ENCODE measurements at regions of chr18 and their contacts with region 1.

Region 1: DNA sequence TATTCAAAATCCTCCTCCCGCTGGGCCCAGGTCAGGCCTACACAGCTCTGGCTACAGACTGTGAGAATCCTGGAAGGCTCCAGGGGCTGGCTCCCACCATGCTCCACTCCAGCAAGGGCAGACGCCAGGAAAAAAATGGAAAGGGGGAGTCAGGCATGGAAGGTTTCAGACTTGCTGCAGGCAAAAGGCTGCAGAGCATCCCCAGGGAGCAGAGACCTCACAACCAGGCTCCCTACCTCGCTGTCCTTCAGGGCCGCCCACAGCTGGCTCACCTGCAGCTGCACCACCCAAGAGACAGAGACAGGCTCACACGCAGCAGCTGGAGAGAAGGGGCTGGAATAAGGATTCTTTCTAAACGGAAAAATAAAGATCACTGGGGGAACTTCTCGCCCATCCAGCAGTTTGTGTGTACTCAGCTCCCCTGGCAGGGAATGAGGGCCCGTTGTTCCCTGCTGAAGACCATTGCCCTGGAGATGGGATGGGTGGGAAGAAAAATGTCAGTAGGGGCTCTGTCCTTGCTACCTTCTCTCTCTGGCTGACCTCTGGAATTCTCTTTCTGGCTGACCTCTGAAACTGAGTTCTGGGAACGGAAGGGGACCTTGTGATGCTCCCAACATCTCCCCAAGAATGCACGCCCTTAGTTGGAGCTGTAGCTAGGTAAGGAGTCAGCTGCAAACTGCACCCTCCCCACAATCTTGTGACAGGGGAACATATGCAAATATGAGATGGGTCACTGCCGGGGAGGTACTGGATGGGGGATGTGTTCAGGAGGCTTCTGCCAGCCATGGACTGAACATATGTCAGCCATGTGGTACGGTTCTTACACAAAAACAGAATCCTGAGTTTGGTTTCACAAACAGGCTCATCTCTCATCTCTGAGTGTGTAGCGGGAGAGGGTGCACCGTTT is 34.5 kb downstream of the BCL2 start:
- DNase-seq: peak; percentile 55
- CTCF ChIP-seq: no peak

Region 2: GRCh38 chr18:63267975-63268721 is 16.9 kb before region 1 on chr18:
- CTCF ChIA-PET with region 1: interaction called, 20 read pairs
- POLR2A ChIA-PET with region 1: no interaction called
- DNase-seq: no peak
- CTCF ChIP-seq: no peak

Region 3: DNA sequence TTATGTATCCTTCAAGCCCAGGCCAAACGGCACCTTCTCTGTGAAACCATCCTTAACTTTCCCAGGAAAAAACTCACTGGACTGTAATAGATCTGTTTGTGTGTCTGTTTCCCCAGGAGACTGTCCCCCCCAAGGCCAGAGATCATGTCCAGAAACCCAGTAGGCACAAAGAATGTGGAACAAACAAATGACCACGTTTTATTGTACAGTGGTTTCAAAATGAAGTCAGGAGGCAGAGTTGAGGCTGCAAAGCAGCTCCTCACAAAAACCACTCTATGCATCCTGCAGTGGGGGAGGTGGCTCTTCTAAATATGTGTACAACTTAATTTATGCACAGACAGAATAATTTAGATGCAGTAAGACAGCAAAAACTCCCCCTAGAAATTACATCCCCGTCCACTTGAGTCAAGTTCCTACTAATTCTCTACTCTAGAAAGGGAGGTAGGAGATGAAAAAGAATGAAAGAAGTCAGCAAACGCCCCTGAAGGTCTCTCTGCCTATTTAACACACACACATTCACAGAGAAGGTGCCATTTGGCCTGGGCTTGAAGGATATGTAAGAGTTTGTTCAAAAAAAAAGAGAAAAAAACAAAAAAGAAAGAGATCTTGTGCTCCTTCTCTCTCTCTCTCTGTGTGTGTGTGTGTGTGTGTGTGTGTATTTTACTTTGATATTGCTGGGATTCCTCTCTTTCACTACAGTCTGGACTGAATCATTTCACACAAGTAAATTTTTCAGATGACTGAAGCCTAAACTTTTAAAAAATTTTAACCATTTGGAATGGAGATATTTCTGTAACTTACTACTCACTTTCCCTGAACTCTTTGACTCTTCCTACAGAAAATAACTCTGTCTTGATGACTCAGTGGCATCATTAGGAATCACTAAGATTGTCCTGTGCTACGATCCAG is 15.0 kb after region 1 on chr18:
- CTCF ChIA-PET with region 1: interaction called, 10 read pairs
- POLR2A ChIA-PET with region 1: interaction called, 3 read pairs
- DNase-seq: peak; percentile 50
- CTCF ChIP-seq: no peak

Measured in GM10248 (cell line).